ENCODE measurements at regions of chr12 and their contacts with region 1.

Region 1: GRCh38 chr12:92065018-92065499 is 80.6 kb downstream of the BTG1 start:
- DNase-seq: peak; percentile 71
- H3K4me3 Mint-ChIP-seq: peak overlapping the region; percentile 35
- H3K27ac Mint-ChIP-seq: peak overlapping the region; percentile 87
- H3K4me1 Mint-ChIP-seq: peaks cover 38% of the 10 kb centered on the region
- H3K27me3 Mint-ChIP-seq: no peaks in the 10 kb centered on the region

Region 2: DNA sequence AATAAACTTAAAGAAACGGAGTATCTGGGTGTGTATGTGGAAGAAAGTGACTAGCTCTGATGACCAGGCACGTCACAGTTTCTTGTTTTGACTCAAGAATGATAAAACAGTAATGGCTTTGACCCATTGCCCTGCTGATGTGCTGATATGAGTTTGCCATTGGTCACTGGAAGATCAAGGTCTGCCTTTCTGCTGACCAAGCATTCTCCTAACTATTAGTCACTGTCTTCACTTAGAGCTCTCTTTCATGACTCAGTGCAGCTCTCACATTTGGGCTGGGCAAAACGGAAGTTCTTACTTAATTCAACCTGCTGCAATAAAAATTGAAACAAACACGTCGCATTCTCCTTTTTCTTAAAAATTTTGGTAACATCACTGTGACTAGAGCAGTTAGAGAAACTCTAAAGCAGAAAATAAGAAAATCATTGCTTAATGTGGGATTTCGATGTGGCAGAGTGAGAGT is 286.1 kb before region 1 on chr12:
- intact Hi-C with region 1: loop called (anchors 5 kb)
- DNase-seq: peak; percentile 77
- H3K4me3 Mint-ChIP-seq: peak overlapping the region; percentile 58
- H3K27ac Mint-ChIP-seq: peak overlapping the region; percentile 73
- H3K4me1 Mint-ChIP-seq: peaks cover 22% of the 10 kb centered on the region
- H3K27me3 Mint-ChIP-seq: peaks cover 2% of the 10 kb centered on the region

Region 3: GRCh38 chr12:92034858-92035401 is 30.1 kb before region 1 on chr12:
- intact Hi-C with region 1: loop called (anchors 1 kb)
- DNase-seq: peak; percentile 83
- H3K4me3 Mint-ChIP-seq: peak overlapping the region; percentile 88
- H3K27ac Mint-ChIP-seq: peak overlapping the region; percentile 84
- H3K4me1 Mint-ChIP-seq: peaks cover 64% of the 10 kb centered on the region
- H3K27me3 Mint-ChIP-seq: no peaks in the 10 kb centered on the region

Region 4: GRCh38 chr12:92078167-92079053 is 13.4 kb after region 1 on chr12:
- intact Hi-C with region 1: loop called (anchors 1 kb)
- DNase-seq: no peak
- H3K4me3 Mint-ChIP-seq: peak overlapping the region; percentile 7
- H3K27ac Mint-ChIP-seq: peak overlapping the region; percentile 82
- H3K4me1 Mint-ChIP-seq: peaks cover 43% of the 10 kb centered on the region
- H3K27me3 Mint-ChIP-seq: no peaks in the 10 kb centered on the region

Region 5: GRCh38 chr12:92185052-92185451 is 120.0 kb after region 1 on chr12:
- intact Hi-C with region 1: loop called (anchors 5 kb)
- DNase-seq: peak; percentile 85
- H3K4me3 Mint-ChIP-seq: peak overlapping the region; percentile 59
- H3K27ac Mint-ChIP-seq: peak overlapping the region; percentile 77
- H3K4me1 Mint-ChIP-seq: peaks cover 51% of the 10 kb centered on the region
- H3K27me3 Mint-ChIP-seq: no peaks in the 10 kb centered on the region

Region 6: GRCh38 chr12:92551853-92552397 is 486.9 kb after region 1 on chr12:
- intact Hi-C with region 1: loop called (anchors 5 kb)
- DNase-seq: peak; percentile 71
- H3K4me3 Mint-ChIP-seq: no peak overlapping the region
- H3K27ac Mint-ChIP-seq: no peak overlapping the region
- H3K4me1 Mint-ChIP-seq: peaks cover 39% of the 10 kb centered on the region
- H3K27me3 Mint-ChIP-seq: no peaks in the 10 kb centered on the region